Esophagus muscularis mucosa (tissue), 4 donors: ENCODE measurements at regions of chr5 and their contacts with region 1.

Region 1: GRCh38 chr5:69217548-69218526 is 16.8 kb upstream of the CDK7 start:
- DNase-seq: peak; percentile 99
- H3K4me3 ChIP-seq: peak overlapping the region; percentile 82 to 100 (median 96)
- H3K27ac ChIP-seq: peak overlapping the region; percentile 84 to 98 (median 94)
- H3K4me1 ChIP-seq: peaks cover 18 to 24% (median 23%) of the 10 kb centered on the region in 4 donors
- H3K27me3 ChIP-seq: no peaks in the 10 kb centered on the region
- CTCF ChIP-seq: peak in 2 of 3 experiments; percentile 10 to 43
- EP300 ChIP-seq: no peak
- POLR2A ChIP-seq: peak; percentile 73

Region 2: GRCh38 chr5:69093771-69094482 is 123.9 kb before region 1 on chr5 and contains the start of gene SLC30A5:
- intact Hi-C with region 1: loop called (anchors 5 kb)
- DNase-seq: peak; percentile 99
- H3K4me3 ChIP-seq: peak within 1 kb of the TSS; percentile 72 to 95 (median 86)
- H3K27ac ChIP-seq: peak within 1 kb of the TSS; percentile 94 to 97 (median 96)
- H3K4me1 ChIP-seq: peaks cover 13 to 30% (median 27%) of the 10 kb centered on the region in 4 donors
- H3K27me3 ChIP-seq: no peaks in the 10 kb centered on the region
- CTCF ChIP-seq: peak; percentile 90 to 96 (median 91)
- EP300 ChIP-seq: no peak
- POLR2A ChIP-seq: no peak
- total RNA-seq, gene SLC30A5: 29.2 to 35.1 (median 32.5) TPM

Region 3: DNA sequence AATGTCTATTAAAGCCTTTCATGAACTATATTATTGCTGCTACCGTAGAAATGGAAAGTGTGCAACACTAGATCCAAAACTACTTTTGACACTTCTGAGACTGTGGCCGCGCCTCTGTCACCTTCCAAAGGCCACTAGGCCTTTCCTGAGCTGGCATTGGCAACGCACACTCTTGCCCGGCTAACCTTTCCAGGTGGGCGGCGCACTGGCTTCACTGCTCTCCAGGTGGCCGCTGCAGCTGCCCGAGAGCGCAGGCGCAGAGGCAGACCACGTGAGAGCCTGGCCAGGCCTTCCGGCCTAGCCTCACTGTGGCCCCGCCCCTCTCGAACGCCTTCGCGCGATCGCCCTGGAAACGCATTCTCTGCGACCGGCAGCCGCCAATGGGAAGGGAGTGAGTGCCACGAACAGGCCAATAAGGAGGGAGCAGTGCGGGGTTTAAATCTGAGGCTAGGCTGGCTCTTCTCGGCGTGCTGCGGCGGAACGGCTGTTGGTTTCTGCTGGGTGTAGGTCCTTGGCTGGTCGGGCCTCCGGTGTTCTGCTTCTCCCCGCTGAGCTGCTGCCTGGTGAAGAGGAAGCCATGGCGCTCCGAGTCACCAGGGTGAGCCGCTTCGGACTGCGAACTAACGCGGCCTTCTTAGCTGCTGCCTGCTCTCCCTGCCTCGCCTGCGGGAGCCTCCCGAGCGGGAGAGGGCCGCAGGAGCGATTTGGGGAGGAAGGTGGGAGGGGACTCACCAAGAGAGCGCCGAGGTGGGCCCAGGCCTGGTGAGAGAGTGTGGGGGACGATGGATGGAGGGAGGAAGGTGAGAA is 50.9 kb before region 1 on chr5 and contains the start of gene CCNB1:
- intact Hi-C with region 1: loop called (anchors 10 kb)
- DNase-seq: peak; percentile 99
- H3K4me3 ChIP-seq: peak within 1 kb of the TSS; percentile 69 to 79 (median 72)
- H3K27ac ChIP-seq: peak within 1 kb of the TSS; percentile 35 to 66 (median 51)
- H3K4me1 ChIP-seq: peaks cover 9 to 18% (median 15%) of the 10 kb centered on the region in 4 donors
- H3K27me3 ChIP-seq: no peaks in the 10 kb centered on the region
- CTCF ChIP-seq: peak in 1 of 3 experiments; percentile 18
- EP300 ChIP-seq: no peak
- POLR2A ChIP-seq: no peak
- total RNA-seq, gene CCNB1: 0.83 to 2.8 (median 2.2) TPM

Region 4: GRCh38 chr5:69234457-69235268 is 16.8 kb after region 1 on chr5 and contains the start of gene CDK7:
- intact Hi-C with region 1: loop called (anchors 2 kb)
- DNase-seq: peak; percentile 98
- H3K4me3 ChIP-seq: peak within 1 kb of the TSS; percentile 70 to 96 (median 76)
- H3K27ac ChIP-seq: peak within 1 kb of the TSS; percentile 77 to 88 (median 84)
- H3K4me1 ChIP-seq: peaks cover 15 to 48% (median 41%) of the 10 kb centered on the region in 4 donors
- H3K27me3 ChIP-seq: no peaks in the 10 kb centered on the region
- CTCF ChIP-seq: peak in 1 of 3 experiments; percentile 12
- EP300 ChIP-seq: no peak
- POLR2A ChIP-seq: no peak
- total RNA-seq, gene CDK7: 16.1 to 27.4 (median 23.5) TPM

Region 5: GRCh38 chr5:69369369-69370121 is 151.7 kb after region 1 on chr5 and contains the starts of genes AK6, RAD17 and TAF9:
- intact Hi-C with region 1: no loop called
- DNase-seq: peak; percentile 98
- H3K4me3 ChIP-seq: peak within 1 kb of the TSS; percentile 66 to 99 (median 69)
- H3K27ac ChIP-seq: peak within 1 kb of the TSS; percentile 89 to 98 (median 93)
- H3K4me1 ChIP-seq: peaks cover 34 to 41% (median 36%) of the 10 kb centered on the region in 4 donors
- H3K27me3 ChIP-seq: no peaks in the 10 kb centered on the region
- CTCF ChIP-seq: peak in 1 of 3 experiments; percentile 4
- EP300 ChIP-seq: no peak
- POLR2A ChIP-seq: peak; percentile 36
- total RNA-seq, gene AK6: 16.1 to 22.0 (median 19.0) TPM
- total RNA-seq, gene RAD17: 14.6 to 22.0 (median 20.0) TPM
- total RNA-seq, gene TAF9: 28.6 to 38.4 (median 31.5) TPM